Gastrocnemius medialis (tissue), 4 donors: ENCODE measurements at regions of chr14 and their contacts with region 1.

Region 1: DNA sequence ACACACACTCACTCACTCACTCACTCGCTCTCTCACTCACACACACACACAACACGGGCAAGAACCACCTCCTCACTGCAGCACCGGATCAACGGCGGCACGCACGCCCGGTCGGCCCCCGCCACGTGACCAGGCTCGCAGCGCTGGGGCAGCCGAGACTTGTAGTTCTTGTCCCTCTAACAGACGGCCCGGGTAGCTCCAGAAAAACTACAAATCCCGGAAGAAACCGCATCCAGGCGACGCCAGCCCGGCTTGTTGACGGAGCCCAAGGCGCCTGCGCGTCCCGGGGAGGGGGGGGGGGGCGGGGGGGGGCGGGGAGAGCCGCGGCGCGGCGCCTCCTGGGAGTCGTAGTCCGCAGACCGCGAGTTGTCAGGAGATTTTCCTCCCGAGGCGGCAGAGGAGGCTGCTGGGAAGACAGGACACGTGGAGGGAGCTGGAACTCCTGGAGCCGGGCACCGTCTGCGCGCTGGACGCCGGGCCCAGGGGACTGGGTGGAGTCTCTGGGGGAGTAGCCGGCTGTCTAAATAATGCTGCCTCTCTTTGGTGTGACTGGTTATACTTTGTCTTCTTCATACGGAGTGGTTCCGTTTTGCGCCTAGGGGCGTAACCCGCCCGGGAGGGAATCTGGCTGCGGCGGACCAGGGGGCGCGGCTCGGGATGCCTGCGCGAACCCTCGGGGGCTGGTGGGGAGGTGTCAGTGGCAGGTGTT is at the start of gene MAX:
- DNase-seq: peak; percentile 99
- ATAC-seq: peak; percentile 88 to 90
- H3K4me3 ChIP-seq: peak within 1 kb of the TSS; percentile 85 to 98 (median 96)
- H3K27ac ChIP-seq: peak within 1 kb of the TSS; percentile 96 to 98 (median 98)
- H3K4me1 ChIP-seq: peaks cover 37% of the 10 kb centered on the region in 2 donors
- H3K27me3 ChIP-seq: no peaks in the 10 kb centered on the region
- CTCF ChIP-seq: no peak
- POLR2A ChIP-seq: peak; percentile 83 to 93
- total RNA-seq, gene MAX: 27.5 to 50.0 (median 37.2) TPM

Region 2: GRCh38 chr14:65361920-65362319 is 259.3 kb after region 1 on chr14:
- in situ Hi-C with region 1: no loop called
- intact Hi-C with region 1: loop called (anchors 10 kb)
- DNase-seq: peak; percentile 71 to 79
- ATAC-seq: peak; percentile 97 to 98
- H3K4me3 ChIP-seq: no peak overlapping the region
- H3K27ac ChIP-seq: peak overlapping the region; percentile 72 to 81 (median 78)
- H3K4me1 ChIP-seq: peaks cover 35 to 39% of the 10 kb centered on the region in 2 donors
- H3K27me3 ChIP-seq: no peaks in the 10 kb centered on the region
- CTCF ChIP-seq: no peak
- POLR2A ChIP-seq: no peak